Uterus (tissue), 4 donors: ENCODE measurements at regions of chr17 and their contacts with region 1.

Region 1: DNA sequence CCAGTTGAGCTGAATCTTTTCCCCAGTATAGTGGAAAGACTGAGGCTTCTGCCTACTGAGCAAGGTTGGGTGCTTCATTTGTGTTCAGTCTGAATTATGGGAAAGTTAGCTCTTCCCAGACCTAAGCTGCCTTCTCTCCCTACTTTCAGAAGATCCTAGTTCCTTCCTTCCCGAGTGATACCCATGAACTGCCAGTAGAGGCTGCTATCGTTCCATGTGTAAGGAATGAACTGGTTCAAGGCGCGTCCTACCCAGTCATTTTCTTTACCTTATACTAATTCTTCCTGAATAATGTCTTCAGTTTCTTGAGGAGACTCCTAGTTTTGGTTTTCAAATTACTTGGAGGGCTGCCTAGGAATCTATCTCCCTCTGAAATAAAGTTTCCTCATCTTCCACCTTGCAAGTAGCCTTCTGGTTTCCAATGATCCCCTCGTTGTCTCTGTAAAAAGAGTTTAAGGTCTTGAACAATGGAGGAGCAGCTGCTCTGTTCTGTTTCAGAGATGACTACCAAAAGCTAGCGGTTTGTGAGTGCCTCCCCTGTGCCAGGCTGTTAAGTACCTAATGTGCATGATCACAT is 934 bp upstream of the AOC2 start:
- DNase-seq: no peak
- H3K4me3 ChIP-seq: no peak overlapping the region
- H3K27ac ChIP-seq: peak overlapping the region in 1 of 2 donors; percentile 31
- H3K4me1 ChIP-seq: no peaks in the 10 kb centered on the region
- H3K27me3 ChIP-seq: no peaks in the 10 kb centered on the region
- CTCF ChIP-seq: peak; percentile 77 to 97 (median 92)
- POLR2A ChIP-seq: no peak

Region 2: GRCh38 chr17:42698736-42699414 is 144.6 kb before region 1 on chr17:
- intact Hi-C with region 1: no loop called
- DNase-seq: peak; percentile 86 to 94
- H3K4me3 ChIP-seq: no peak overlapping the region
- H3K27ac ChIP-seq: peak overlapping the region; percentile 65 to 74
- H3K4me1 ChIP-seq: peaks cover 0 to 9% of the 10 kb centered on the region in 2 donors
- H3K27me3 ChIP-seq: no peaks in the 10 kb centered on the region
- CTCF ChIP-seq: no peak
- POLR2A ChIP-seq: no peak

Region 3: DNA sequence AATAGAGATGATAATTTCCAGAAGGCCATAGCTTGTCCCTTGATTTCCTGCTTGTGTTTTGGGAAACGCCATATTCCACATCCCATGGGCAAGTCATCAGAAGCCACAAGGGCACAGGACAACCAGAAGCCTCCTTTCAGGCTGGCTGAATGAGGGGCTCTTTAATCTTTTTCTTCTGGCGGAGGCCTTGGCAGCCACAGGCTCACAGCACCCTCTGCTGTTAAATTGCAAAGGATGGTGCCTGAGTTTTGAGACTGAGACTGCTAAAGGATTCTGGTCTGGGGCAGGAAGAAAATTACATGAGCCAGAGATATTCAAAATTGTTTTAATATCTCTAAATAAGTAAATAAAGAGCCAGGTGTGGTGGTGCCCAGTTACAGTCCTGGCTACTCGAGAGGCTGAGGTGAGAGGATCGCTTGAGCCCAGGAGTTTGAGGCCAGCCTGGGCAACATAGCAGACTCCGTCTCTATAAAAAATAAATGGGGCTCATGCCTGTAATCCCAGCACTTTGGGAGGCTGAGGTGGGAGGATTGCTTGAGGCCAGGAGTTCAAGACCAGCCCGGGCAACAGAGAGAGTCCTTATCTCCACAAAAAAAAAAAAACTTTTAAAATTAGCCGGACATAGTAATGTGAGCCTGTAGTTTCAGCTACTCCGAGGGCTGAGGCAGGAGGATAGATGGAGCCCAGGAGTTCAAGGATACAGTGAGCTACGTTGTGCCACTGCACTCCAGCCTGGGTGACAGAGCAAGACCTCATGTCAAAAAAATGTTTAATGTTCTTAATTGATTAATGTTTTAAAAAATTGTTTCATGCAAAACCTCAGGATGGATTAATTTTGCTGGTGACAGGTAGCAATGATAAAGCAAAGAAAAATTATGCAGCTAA is 94.5 kb after region 1 on chr17:
- intact Hi-C with region 1: loop called (anchors 5 kb)
- DNase-seq: peak; percentile 29 to 47
- H3K4me3 ChIP-seq: no peak overlapping the region
- H3K27ac ChIP-seq: no peak overlapping the region
- H3K4me1 ChIP-seq: no peaks in the 10 kb centered on the region
- H3K27me3 ChIP-seq: no peaks in the 10 kb centered on the region
- CTCF ChIP-seq: peak; percentile 58 to 71 (median 62)
- POLR2A ChIP-seq: no peak